RWPE1 (cell line): ENCODE measurements at regions of chr16 and their contacts with region 1.

Region 1: DNA sequence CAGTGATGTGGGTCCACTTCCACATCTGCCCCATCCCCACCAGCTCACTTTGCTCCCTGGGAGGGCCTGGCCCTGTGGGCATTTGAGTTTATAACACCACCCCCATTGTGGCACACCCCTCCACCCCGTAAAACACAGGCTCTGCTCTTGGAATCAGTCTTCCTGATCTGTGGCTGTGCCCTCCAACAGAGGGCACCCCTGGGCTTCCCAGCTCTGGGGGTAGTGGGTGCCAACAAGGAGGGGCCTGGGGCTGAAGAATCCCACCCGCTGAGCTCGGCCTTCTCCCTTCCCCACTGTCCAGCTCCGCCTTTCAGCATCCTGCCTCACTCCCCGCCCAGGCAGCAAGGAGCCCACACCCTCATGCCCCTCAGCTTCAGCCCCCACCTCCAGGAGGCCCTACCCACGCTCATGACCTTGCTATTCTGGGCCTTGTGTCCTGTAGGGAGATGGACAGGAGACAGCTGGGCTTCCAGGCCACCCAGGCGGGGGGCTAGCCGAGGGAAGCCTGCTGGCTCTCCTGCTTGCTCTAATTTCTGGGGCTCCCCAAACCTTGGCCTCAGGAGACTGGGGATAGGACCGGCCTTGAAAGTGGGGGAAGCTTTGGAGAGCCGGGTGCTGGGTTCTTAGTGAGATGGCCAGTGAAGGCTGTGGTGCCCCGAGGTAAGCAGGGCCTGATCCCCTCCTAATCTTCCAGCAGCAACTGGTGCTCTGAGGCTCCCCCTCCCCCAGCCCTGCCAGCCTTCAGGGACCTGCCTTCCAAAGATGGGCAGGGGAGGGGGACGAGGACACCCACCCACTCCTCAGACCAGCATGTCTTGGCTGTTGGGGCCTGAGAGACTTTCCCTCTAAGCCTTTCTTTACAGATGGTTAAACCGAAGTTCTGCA is 2.9 kb upstream of the ATP2A1 start:
- DNase-seq: no peak
- H3K27ac ChIP-seq: peak overlapping the region; percentile 64
- CTCF ChIP-seq: no peak

Region 2: GRCh38 chr16:28943281-28943680 is 67.9 kb after region 1 on chr16:
- CTCF ChIA-PET with region 1: interaction called, 10 read pairs
- POLR2A ChIA-PET with region 1: no interaction called
- DNase-seq: no peak
- H3K27ac ChIP-seq: no peak overlapping the region
- CTCF ChIP-seq: no peak

Region 3: GRCh38 chr16:28999577-28999976 is 124.2 kb after region 1 on chr16:
- CTCF ChIA-PET with region 1: no interaction called
- POLR2A ChIA-PET with region 1: no interaction called
- DNase-seq: no peak
- H3K27ac ChIP-seq: no peak overlapping the region
- CTCF ChIP-seq: no peak